ENCODE measurements at regions of chr11 and their contacts with region 1.

Region 1: DNA sequence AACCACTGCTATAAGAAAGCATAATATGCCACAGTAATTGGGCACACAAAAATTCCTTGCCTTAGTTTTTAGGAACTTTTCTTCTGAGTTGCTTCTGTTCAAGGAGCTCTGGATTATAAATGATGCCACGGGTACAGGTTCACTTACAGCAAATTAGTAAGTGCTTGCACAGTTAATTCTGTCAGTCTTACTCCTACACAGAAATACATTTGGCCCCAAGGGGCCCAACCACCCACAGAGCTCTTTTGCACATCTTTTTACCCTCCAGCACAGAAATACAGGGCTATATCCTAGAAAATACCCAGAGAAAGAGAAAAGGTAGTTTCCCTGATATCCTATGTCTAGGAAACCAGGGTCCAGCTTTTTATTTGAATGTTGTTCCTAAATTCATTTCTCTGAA is 86.6 kb upstream of the CHRM4 start:
- DNase-seq: no peak
- ATAC-seq: no peak
- H3K4me3 ChIP-seq: no peak overlapping the region
- H3K27ac ChIP-seq: no peak overlapping the region
- H3K4me1 ChIP-seq: peaks cover 0 to 29% (median 2%) of the 10 kb centered on the region in 12 donors
- H3K27me3 ChIP-seq: no peaks in the 10 kb centered on the region
- CTCF ChIP-seq: no peak
- POLR2A ChIP-seq: no peak

Region 2: GRCh38 chr11:46457659-46458424 is 20.4 kb before region 1 on chr11:
- intact Hi-C with region 1: loop called in 1 of 10 experiments (anchors 1 kb)
- DNase-seq: no peak
- ATAC-seq: no peak
- H3K4me3 ChIP-seq: no peak overlapping the region
- H3K27ac ChIP-seq: no peak overlapping the region
- H3K4me1 ChIP-seq: peaks cover 0 to 8% (median 0%) of the 10 kb centered on the region in 12 donors
- H3K27me3 ChIP-seq: no peaks in the 10 kb centered on the region
- CTCF ChIP-seq: no peak
- POLR2A ChIP-seq: no peak

Region 3: DNA sequence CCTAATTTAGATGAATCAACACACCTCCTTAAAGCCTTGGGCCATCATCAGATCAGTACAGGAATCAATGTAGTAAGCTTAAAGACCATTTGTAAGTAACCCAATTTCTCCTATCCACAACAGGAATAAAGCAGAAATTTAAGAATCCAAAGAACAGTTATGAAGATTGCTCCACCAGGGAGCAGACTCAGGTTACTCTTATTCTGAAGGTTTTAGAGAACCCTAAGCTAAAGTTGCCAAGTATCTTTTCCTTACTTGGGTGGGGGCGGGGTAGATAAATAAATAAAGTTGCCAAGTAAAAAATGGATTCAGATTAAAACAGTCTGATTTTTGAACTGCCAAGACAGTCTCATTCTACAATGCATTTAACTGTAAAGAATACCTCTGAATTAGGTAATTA is 349.8 kb after region 1 on chr11:
- intact Hi-C with region 1: no loop called
- DNase-seq: no peak
- ATAC-seq: no peak
- H3K4me3 ChIP-seq: no peak overlapping the region
- H3K27ac ChIP-seq: no peak overlapping the region
- H3K4me1 ChIP-seq: peaks cover 0 to 47% (median 32%) of the 10 kb centered on the region in 12 donors
- H3K27me3 ChIP-seq: no peaks in the 10 kb centered on the region
- CTCF ChIP-seq: no peak
- POLR2A ChIP-seq: no peak

Measured in heart left ventricle (tissue), 16 donors.